ENCODE measurements at regions of chr2 and their contacts with region 1.

Region 1: GRCh38 chr2:120358734-120359465 is 13.0 kb downstream of the INHBB start:
- DNase-seq: no peak

Region 2: GRCh38 chr2:120384486-120385354 is 25.8 kb after region 1 on chr2:
- intact Hi-C with region 1: loop called in 1 of 2 experiments (anchors 1 kb)
- DNase-seq: peak; percentile 52

Region 3: DNA sequence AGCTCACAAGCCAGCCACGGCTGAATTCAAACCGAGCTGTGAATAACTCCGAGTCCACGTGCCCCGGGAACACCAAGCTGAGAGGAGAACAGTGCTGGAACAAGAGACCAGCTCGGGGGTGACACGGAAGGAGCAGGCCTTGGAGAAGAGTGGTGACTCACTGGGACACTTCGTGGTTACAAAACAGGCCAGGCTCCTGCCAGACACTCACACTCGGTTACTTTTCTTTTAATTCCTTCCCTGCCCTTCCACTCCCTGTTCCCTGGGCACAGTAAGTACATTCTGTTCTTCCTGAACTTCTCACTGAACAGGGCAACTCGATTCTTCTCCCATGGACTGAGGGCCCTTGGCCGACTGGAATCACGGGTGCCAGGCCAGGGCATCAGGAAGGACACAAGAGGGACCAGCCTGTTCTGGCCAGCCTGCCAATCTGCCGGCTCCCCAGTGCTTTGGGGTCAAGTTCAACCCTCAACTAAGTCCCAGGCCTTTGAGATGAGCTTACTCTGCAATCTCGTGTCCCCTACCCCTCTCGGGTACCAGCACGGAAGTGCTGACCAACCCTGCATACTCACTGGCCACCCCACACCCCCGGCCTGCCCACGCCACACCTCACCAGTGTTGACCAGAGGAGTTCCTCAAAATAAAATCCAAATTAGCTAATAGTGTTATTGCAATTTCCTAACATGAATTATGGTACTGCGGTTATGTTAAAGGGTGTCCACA is 838.6 kb after region 1 on chr2:
- intact Hi-C with region 1: no loop called
- DNase-seq: peak; percentile 93